Heart left ventricle (tissue), 16 donors: ENCODE measurements at regions of chr1 and their contacts with region 1.

Region 1: GRCh38 chr1:11873395-11874257 is 14.9 kb upstream of the NPPB start:
- DNase-seq: no peak
- ATAC-seq: no peak
- H3K4me3 ChIP-seq: no peak overlapping the region
- H3K27ac ChIP-seq: peak overlapping the region in 11 of 12 donors; percentile 63 to 95 (median 81)
- H3K4me1 ChIP-seq: peaks cover 0 to 40% (median 20%) of the 10 kb centered on the region in 12 donors
- H3K27me3 ChIP-seq: no peaks in the 10 kb centered on the region
- CTCF ChIP-seq: no peak
- POLR2A ChIP-seq: peak in 1 of 2 donors; percentile 26

Region 2: DNA sequence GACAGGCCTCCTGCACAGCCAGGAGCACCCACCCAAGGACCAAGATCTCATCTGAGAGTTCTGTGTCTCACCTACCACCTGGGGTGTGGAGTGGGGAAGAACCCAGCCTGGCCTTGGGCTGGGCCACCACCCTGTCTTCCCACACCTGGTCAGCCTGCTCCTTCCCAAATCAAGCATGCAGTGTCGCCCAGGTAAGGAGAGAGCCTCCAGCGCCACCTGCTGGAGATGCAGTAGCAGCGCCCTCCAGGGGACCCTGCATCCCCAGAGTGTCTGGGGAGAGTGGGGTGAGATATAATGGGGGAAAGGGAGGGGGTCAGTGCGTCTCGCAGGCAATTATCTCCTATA is 20.3 kb after region 1 on chr1:
- intact Hi-C with region 1: loop called in 1 of 10 experiments (anchors 2 kb)
- DNase-seq: peak; percentile 72 to 85 (median 74)
- ATAC-seq: peak; percentile 81 to 94 (median 90)
- H3K4me3 ChIP-seq: no peak overlapping the region
- H3K27ac ChIP-seq: no peak overlapping the region
- H3K4me1 ChIP-seq: peaks cover 0 to 8% (median 0%) of the 10 kb centered on the region in 12 donors
- H3K27me3 ChIP-seq: peaks cover 2 to 37% (median 14%) of the 10 kb centered on the region in 9 donors
- CTCF ChIP-seq: peak; percentile 84 to 94 (median 88)
- POLR2A ChIP-seq: no peak

Region 3: GRCh38 chr1:11907275-11908094 is 33.9 kb after region 1 on chr1:
- intact Hi-C with region 1: no loop called
- DNase-seq: peak; percentile 90 to 94 (median 91)
- ATAC-seq: peak; percentile 82 to 91 (median 88)
- H3K4me3 ChIP-seq: peak overlapping the region in 10 of 12 donors; percentile 59 to 76 (median 66)
- H3K27ac ChIP-seq: peak overlapping the region; percentile 91 to 99 (median 97)
- H3K4me1 ChIP-seq: peaks cover 0 to 17% (median 0%) of the 10 kb centered on the region in 12 donors
- H3K27me3 ChIP-seq: no peaks in the 10 kb centered on the region
- CTCF ChIP-seq: peak; percentile 51 to 99 (median 76)
- POLR2A ChIP-seq: no peak